GM12878 (cell line): ENCODE measurements at regions of chr3 and their contacts with region 1.

Region 1: GRCh38 chr3:2156244-2156847 is 57.7 kb downstream of the CNTN4 start:
- DNase-seq: no peak
- ATAC-seq: peak; percentile 89
- H3K4me3 ChIP-seq: no peak overlapping the region
- H3K27ac ChIP-seq: no peak overlapping the region
- H3K4me1 ChIP-seq: no peaks in the 10 kb centered on the region
- H3K27me3 ChIP-seq: no peaks in the 10 kb centered on the region; a peak in 1 of 4 replicates
- CTCF ChIP-seq: peak; percentile 51 to 78 (median 73)
- EP300 ChIP-seq: no peak
- POLR2A ChIP-seq: no peak
- RAD21 ChIP-seq: peak; percentile 51; the same call in 1 of the 2 replicates

Region 2: GRCh38 chr3:901953-902778 is 1254.2 kb before region 1 on chr3:
- CTCF ChIA-PET with region 1: no interaction called
- POLR2A ChIA-PET with region 1: no interaction called
- RAD21 ChIA-PET with region 1: no interaction called
- SMC1A ChIA-PET with region 1: no interaction called
- in situ Hi-C with region 1: no loop called
- intact Hi-C with region 1: loop called (anchors 5 kb)
- DNase-seq: no peak
- ATAC-seq: peak; percentile 86
- H3K4me3 ChIP-seq: no peak overlapping the region
- H3K27ac ChIP-seq: no peak overlapping the region
- H3K4me1 ChIP-seq: no peaks in the 10 kb centered on the region
- H3K27me3 ChIP-seq: no peaks in the 10 kb centered on the region
- CTCF ChIP-seq: peak; percentile 28 to 53 (median 48); a peak in 4 of 6 replicates
- EP300 ChIP-seq: no peak
- POLR2A ChIP-seq: no peak
- RAD21 ChIP-seq: peak; percentile 40; the same call in 1 of the 2 replicates

Region 3: GRCh38 chr3:2166552-2166951 is 10.2 kb after region 1 on chr3:
- CTCF ChIA-PET with region 1: interaction called, 18 read pairs
- POLR2A ChIA-PET with region 1: no interaction called
- RAD21 ChIA-PET with region 1: no interaction called
- SMC1A ChIA-PET with region 1: interaction called, 5 read pairs
- in situ Hi-C with region 1: no loop called
- intact Hi-C with region 1: no loop called
- DNase-seq: no peak
- ATAC-seq: peak; percentile 52; the same call in 1 of the 3 replicates
- H3K4me3 ChIP-seq: no peak overlapping the region
- H3K27ac ChIP-seq: no peak overlapping the region
- H3K4me1 ChIP-seq: no peaks in the 10 kb centered on the region
- H3K27me3 ChIP-seq: no peaks in the 10 kb centered on the region
- CTCF ChIP-seq: peak; percentile 29 to 33 (median 31); a peak in 4 of 6 replicates
- EP300 ChIP-seq: no peak
- POLR2A ChIP-seq: no peak
- RAD21 ChIP-seq: peak; percentile 43; the same call in 1 of the 2 replicates

Region 4: GRCh38 chr3:3015185-3016089 is 859.1 kb after region 1 on chr3:
- CTCF ChIA-PET with region 1: no interaction called
- POLR2A ChIA-PET with region 1: no interaction called
- RAD21 ChIA-PET with region 1: no interaction called
- SMC1A ChIA-PET with region 1: no interaction called
- in situ Hi-C with region 1: no loop called
- intact Hi-C with region 1: loop called (anchors 10 kb)
- DNase-seq: no peak
- ATAC-seq: peak; percentile 78
- H3K4me3 ChIP-seq: no peak overlapping the region
- H3K27ac ChIP-seq: no peak overlapping the region
- H3K4me1 ChIP-seq: no peaks in the 10 kb centered on the region
- H3K27me3 ChIP-seq: no peaks in the 10 kb centered on the region
- CTCF ChIP-seq: peak; percentile 44 to 72 (median 59); a peak in 5 of 6 replicates
- EP300 ChIP-seq: no peak
- POLR2A ChIP-seq: no peak
- RAD21 ChIP-seq: peak; percentile 92